CD4-positive, alpha-beta memory T cell (primary cell): ENCODE measurements at regions of chr12 and their contacts with region 1.

Region 1: DNA sequence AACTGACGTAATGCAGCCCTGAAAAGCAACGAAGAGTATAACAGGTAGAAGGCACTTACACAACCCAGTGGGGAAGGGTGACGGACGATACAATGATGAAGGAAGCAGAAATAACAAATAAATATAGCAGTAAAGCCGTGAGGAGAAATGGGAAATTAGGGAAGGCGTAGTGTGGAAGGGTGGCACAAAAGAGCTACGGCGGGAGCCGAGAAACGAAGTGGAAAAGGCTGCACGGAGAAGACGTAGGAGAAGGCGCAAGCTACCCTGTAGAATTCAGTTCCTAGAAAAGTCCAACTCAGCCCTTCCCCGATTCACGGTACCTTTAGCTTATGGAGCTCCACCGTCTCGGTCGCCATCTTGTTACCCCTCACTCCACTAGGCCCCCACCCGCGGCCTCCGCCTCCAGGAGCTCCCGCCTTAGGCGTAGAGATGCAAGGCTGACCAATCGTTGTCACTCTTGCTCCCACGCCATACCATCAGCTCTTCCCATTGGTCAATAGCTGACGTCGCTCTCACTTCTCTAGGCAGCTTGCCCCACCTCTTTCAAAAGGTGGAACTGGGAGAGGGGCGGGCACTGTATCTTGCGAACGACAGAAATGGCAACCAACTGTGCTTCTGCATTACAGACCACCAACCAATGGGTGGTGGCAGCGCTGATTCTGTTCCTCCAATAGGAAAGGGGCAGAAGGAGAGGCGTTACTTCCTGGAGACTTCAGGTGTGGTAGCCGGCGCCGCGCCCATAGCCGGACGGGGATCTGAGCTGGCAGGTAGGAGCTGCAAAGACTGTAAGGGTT is at the starts of genes ORMDL2 and SARNP:
- DNase-seq: peak; percentile 95 to 100 (median 99)
- H3K4me3 ChIP-seq: peak within 1 kb of the TSS; percentile 76 to 96
- H3K4me3 Mint-ChIP-seq: no peak within 1 kb of the TSS
- H3K27ac ChIP-seq: peak within 1 kb of the TSS; percentile 88
- H3K27ac Mint-ChIP-seq: no peak within 1 kb of the TSS
- H3K4me1 ChIP-seq: peaks cover 51% of the 10 kb centered on the region
- H3K4me1 Mint-ChIP-seq: peaks cover 23 to 36% (median 25%) of the 10 kb centered on the region in 4 donors
- H3K27me3 ChIP-seq: no peaks in the 10 kb centered on the region
- H3K27me3 Mint-ChIP-seq: no peaks in the 10 kb centered on the region
- total RNA-seq, gene ORMDL2: 42.6 to 44.4 TPM
- total RNA-seq, gene SARNP: 47.7 to 49.4 TPM

Region 2: GRCh38 chr12:54984658-54985376 is 832.7 kb before region 1 on chr12 and contains the start of gene TESPA1:
- CTCF ChIA-PET with region 1: no interaction called
- POLR2A ChIA-PET with region 1: interaction called, 3 read pairs
- intact Hi-C with region 1: loop called (anchors 10 kb)
- DNase-seq: peak; percentile 86 to 94 (median 90)
- H3K4me3 ChIP-seq: peak within 1 kb of the TSS; percentile 66 to 86
- H3K4me3 Mint-ChIP-seq: peak within 1 kb of the TSS; percentile 89 to 99 (median 95)
- H3K27ac ChIP-seq: peak within 1 kb of the TSS; percentile 92
- H3K27ac Mint-ChIP-seq: peak within 1 kb of the TSS; percentile 97 to 100 (median 98)
- H3K4me1 ChIP-seq: peaks cover 71% of the 10 kb centered on the region
- H3K4me1 Mint-ChIP-seq: peaks cover 53 to 97% (median 64%) of the 10 kb centered on the region in 4 donors
- H3K27me3 ChIP-seq: no peaks in the 10 kb centered on the region
- H3K27me3 Mint-ChIP-seq: no peaks in the 10 kb centered on the region
- total RNA-seq, gene TESPA1: 269 to 287 TPM

Region 3: DNA sequence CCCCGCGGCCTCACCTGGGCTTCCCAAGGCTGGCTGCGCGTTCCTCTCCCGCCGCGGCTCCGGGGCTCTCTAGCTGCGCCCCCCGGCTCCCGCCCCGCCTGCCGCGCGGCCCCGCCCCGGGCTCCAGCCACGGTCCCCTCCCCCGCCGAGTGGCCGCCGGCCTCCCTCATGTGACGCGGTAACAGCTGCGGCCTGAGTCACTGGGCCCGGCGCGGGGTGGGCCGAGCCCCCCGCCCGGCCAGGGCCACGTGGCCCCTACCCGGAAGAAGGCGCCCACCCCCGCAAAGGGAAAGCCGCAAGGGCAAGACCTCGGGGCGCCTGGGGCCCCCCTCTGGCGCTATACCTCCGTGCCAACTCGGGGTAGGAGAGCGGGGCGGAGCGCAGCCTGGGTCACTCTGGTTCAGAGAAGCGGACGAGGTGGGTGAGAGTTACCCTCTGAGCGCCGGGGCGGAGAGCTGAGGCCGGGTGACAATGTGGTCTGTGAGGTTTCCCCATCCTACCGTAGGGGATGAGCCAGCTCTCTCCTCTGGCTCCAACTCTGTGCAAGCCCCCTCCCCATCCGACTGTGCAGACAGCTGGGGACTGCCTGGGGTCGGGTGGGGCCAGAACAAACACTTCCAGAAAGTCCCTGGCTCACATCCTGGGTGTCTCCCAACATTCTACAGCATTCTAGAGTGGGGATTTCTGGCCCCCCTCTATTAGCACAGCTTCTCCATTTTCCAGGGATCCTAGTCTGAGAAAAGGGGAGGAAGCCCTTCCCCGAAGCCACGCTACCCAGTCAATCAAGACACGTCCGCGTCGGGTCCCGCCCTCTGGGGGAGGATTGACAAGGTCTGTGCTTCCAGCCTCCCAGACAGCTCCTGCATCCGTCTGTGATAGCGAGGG is 88.4 kb before region 1 on chr12 and contains the start of gene CD63:
- CTCF ChIA-PET with region 1: interaction called, 3 read pairs
- POLR2A ChIA-PET with region 1: interaction called, 17 read pairs
- intact Hi-C with region 1: no loop called
- DNase-seq: peak; percentile 34 to 71 (median 35)
- H3K4me3 ChIP-seq: peak within 1 kb of the TSS; percentile 79 to 86
- H3K4me3 Mint-ChIP-seq: peak within 1 kb of the TSS; percentile 91 to 94 (median 91)
- H3K27ac ChIP-seq: peak within 1 kb of the TSS; percentile 60
- H3K27ac Mint-ChIP-seq: peak within 1 kb of the TSS; percentile 75 to 97 (median 95)
- H3K4me1 ChIP-seq: peaks cover 28% of the 10 kb centered on the region
- H3K4me1 Mint-ChIP-seq: peaks cover 33 to 52% (median 42%) of the 10 kb centered on the region in 4 donors
- H3K27me3 ChIP-seq: no peaks in the 10 kb centered on the region
- H3K27me3 Mint-ChIP-seq: no peaks in the 10 kb centered on the region
- total RNA-seq, gene CD63: 76.4 to 79.7 TPM

Region 4: GRCh38 chr12:55926738-55927587 is 109.4 kb after region 1 on chr12:
- CTCF ChIA-PET with region 1: interaction called, 16 read pairs
- POLR2A ChIA-PET with region 1: interaction called, 210 read pairs
- intact Hi-C with region 1: loop called (anchors 1 kb)
- DNase-seq: peak; percentile 83 to 91 (median 85)
- H3K4me3 ChIP-seq: peak overlapping the region; percentile 95 to 100
- H3K4me3 Mint-ChIP-seq: peak overlapping the region; percentile 97 to 100 (median 99)
- H3K27ac ChIP-seq: peak overlapping the region; percentile 88
- H3K27ac Mint-ChIP-seq: peak overlapping the region; percentile 92 to 99 (median 96)
- H3K4me1 ChIP-seq: peaks cover 51% of the 10 kb centered on the region
- H3K4me1 Mint-ChIP-seq: peaks cover 36 to 79% (median 46%) of the 10 kb centered on the region in 4 donors
- H3K27me3 ChIP-seq: no peaks in the 10 kb centered on the region
- H3K27me3 Mint-ChIP-seq: no peaks in the 10 kb centered on the region

Region 5: DNA sequence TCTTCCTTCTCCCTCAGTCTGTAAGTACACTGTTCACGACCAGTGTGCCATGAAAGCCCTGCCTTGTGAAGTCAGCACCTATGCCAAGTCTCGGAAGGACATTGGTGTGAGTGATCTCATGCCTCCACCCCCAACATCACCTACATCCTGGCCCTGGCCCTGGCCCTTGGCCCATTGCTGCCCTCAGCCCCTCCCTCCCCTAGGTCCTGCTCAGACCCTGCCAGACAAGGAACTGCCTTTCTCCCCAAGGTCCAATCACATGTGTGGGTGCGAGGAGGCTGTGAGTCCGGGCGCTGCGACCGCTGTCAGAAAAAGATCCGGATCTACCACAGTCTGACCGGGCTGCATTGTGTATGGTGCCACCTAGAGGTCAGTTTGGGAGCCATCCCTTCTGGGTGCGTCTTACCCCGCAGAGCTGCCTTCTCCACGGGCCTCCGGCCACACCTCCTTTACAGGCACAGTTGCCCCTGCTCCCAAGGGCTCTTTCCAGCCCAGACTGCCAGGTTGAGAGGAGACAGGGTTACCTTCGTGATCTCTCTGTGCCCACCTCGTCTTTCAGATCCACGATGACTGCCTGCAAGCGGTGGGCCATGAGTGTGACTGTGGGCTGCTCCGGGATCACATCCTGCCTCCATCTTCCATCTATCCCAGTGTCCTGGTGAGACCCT is 122.7 kb after region 1 on chr12:
- CTCF ChIA-PET with region 1: interaction called, 19 read pairs
- POLR2A ChIA-PET with region 1: interaction called, 210 read pairs
- intact Hi-C with region 1: loop called (anchors 1 kb)
- DNase-seq: peak; percentile 83 to 86 (median 84)
- H3K4me3 ChIP-seq: peak overlapping the region in 1 of 2 donors; percentile 4
- H3K4me3 Mint-ChIP-seq: peak overlapping the region in 7 of 8 donors; percentile 32 to 76 (median 62)
- H3K27ac ChIP-seq: peak overlapping the region; percentile 48
- H3K27ac Mint-ChIP-seq: peak overlapping the region; percentile 82 to 96 (median 92)
- H3K4me1 ChIP-seq: peaks cover 66% of the 10 kb centered on the region
- H3K4me1 Mint-ChIP-seq: peaks cover 56 to 89% (median 66%) of the 10 kb centered on the region in 4 donors
- H3K27me3 ChIP-seq: no peaks in the 10 kb centered on the region
- H3K27me3 Mint-ChIP-seq: no peaks in the 10 kb centered on the region

Region 6: DNA sequence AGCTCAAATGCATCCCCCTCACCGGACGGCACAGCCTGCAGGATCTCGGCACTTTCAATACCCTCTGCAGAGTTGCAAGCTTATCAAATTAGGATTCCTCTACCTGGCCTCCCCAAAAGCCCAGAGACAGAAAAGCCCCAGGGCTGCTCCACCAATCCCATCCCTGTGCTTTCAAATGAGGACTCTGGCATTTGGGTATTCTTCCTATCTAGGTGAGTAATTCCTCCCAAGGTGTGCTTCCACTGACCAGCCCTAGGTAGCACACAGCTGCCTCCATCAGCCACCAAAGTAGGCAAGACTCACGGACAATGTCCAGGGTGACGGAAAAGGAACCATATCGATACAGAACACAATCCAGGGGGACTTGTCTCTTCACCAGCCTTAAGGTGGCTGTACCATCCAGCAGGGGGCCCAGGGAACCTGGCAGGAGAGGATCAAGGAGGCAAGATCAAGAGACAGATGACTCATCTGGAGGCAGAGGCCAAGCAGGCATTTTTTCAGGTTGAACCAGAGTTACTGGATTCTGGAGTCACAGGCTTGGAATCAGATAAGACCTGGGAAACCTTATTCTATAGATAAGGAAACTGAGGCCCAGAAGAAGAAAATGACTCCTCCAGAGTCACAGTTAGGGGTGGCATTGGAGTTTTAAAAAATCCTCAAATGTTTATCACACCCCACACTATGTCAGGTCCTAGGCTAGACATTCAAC is 138.4 kb after region 1 on chr12:
- CTCF ChIA-PET with region 1: no interaction called
- POLR2A ChIA-PET with region 1: interaction called, 18 read pairs
- intact Hi-C with region 1: no loop called
- DNase-seq: peak in 4 of 5 donors; percentile 26 to 66 (median 31)
- H3K4me3 ChIP-seq: no peak overlapping the region
- H3K4me3 Mint-ChIP-seq: no peak overlapping the region
- H3K27ac ChIP-seq: no peak overlapping the region
- H3K27ac Mint-ChIP-seq: peak overlapping the region; percentile 30 to 76 (median 69)
- H3K4me1 ChIP-seq: peaks cover 21% of the 10 kb centered on the region
- H3K4me1 Mint-ChIP-seq: peaks cover 13 to 28% (median 19%) of the 10 kb centered on the region in 4 donors
- H3K27me3 ChIP-seq: no peaks in the 10 kb centered on the region
- H3K27me3 Mint-ChIP-seq: no peaks in the 10 kb centered on the region

Region 7: GRCh38 chr12:56041552-56042429 is 224.2 kb after region 1 on chr12 and contains the start of gene RPS26:
- CTCF ChIA-PET with region 1: no interaction called
- POLR2A ChIA-PET with region 1: interaction called, 3 read pairs
- intact Hi-C with region 1: loop called (anchors 1 kb)
- DNase-seq: peak; percentile 95 to 98 (median 96)
- H3K4me3 ChIP-seq: peak within 1 kb of the TSS; percentile 94 to 97
- H3K4me3 Mint-ChIP-seq: peak within 1 kb of the TSS; percentile 98 to 100 (median 99)
- H3K27ac ChIP-seq: peak within 1 kb of the TSS; percentile 87
- H3K27ac Mint-ChIP-seq: peak within 1 kb of the TSS; percentile 96 to 100 (median 99)
- H3K4me1 ChIP-seq: peaks cover 23% of the 10 kb centered on the region
- H3K4me1 Mint-ChIP-seq: peaks cover 15 to 45% (median 23%) of the 10 kb centered on the region in 4 donors
- H3K27me3 ChIP-seq: no peaks in the 10 kb centered on the region
- H3K27me3 Mint-ChIP-seq: no peaks in the 10 kb centered on the region
- total RNA-seq, gene RPS26: 55.6 to 55.8 TPM